ENCODE measurements at regions of chr22 and their contacts with region 1.

Region 1: DNA sequence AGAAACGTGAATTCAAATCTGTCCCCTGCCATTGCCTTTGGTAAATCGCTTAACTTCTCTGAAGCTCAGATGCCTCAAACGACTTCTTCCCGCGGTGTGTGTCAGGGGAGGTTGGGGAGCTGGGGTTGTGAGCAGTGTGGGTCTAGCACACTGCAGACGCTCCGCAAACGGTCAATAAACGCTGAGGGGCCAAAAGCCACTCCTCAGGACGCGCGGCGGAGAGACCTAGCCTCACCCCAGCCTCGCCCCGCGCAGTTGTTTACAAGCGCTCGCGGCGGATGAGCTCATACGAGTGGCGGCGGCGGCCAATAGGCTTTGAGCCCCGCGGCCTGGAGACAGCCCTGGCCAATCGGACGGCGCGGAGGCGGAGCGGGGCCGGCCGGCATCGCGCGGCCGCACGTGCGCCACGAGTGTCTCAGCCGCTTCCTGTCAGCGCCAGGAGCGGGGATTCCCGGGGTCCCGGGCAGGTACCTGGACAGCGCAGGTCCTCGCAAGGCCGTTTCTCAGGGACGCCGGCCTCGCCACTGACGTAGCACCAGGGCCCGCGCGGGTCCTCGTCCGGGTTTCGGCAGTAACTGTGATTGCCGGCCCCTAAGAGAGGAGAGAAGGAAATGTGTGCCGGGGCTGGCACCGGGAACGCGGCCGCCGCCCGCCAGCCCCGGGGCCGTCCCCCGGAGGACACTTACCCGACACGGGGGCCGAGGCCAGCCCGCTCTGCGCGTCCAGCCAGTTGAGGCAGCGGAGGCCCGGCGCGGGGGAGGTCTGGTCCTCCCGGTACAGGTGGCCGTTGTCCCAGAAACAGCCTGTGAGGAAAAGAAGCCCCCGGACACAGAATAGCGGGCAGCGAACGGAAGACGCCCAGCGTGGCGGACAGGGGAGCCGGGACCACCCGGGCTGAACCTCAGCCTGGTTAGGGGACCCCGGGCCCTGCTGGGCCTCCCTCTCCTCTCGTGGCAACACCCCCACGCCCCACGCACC is 1.5 kb downstream of the PIK3IP1 start:
- DNase-seq: peak; percentile 92
- ATAC-seq: peak; percentile 88
- H3K4me3 Mint-ChIP-seq: peak overlapping the region; percentile 74
- H3K27ac Mint-ChIP-seq: peak overlapping the region; percentile 71
- H3K4me1 Mint-ChIP-seq: peaks cover 26% of the 10 kb centered on the region
- H3K27me3 Mint-ChIP-seq: peaks cover 25% of the 10 kb centered on the region
- CTCF ChIP-seq: no peak

Region 2: DNA sequence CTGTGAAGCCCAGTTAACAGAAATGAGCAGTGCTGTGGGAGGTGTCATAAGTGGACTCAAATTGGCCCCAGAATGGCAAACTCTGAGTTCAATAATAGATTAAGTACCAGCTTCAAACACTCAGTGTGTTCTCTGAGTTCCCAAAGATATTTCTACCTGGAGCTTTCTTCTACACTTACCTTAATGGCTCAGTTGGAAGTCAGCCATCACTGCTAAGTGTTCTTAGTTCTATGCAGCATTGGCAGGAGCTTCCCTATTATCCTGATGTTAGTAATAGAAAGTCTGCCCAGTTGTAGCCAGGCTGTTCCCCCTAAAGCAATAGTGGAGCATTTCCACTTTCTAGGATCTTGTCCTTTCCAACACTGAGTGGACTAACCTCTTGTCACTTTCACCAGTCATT is 11.2 kb after region 1 on chr22:
- CTCF ChIA-PET with region 1: interaction called, 20 read pairs
- POLR2A ChIA-PET with region 1: interaction called, 3 read pairs
- DNase-seq: no peak
- ATAC-seq: peak; percentile 53
- H3K4me3 Mint-ChIP-seq: no peak overlapping the region
- H3K27ac Mint-ChIP-seq: no peak overlapping the region
- H3K4me1 Mint-ChIP-seq: peaks cover 5% of the 10 kb centered on the region; the same call in 1 of the 2 replicates
- H3K27me3 Mint-ChIP-seq: no peaks in the 10 kb centered on the region
- CTCF ChIP-seq: no peak

Region 3: DNA sequence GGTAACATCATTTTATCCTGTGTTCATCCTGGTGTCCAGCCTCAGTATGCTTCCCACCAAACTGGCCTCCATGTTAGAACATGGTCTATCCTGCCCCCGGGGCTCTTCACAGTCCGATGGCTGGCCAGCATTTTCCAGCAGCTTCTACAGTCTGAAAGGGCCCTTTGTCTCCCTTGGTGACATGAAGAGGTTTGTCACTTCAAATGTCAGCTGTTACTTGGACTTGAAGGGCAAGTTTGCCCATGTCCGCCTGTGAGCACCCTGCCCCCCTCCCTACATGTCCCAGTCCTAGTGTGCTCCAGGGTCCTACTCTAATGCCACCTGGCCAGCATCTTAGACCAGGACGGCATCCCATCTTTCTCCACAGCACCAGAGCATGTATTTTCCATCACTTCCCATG is 30.6 kb after region 1 on chr22:
- CTCF ChIA-PET with region 1: no interaction called
- POLR2A ChIA-PET with region 1: no interaction called
- DNase-seq: no peak
- ATAC-seq: no peak
- H3K4me3 Mint-ChIP-seq: no peak overlapping the region
- H3K27ac Mint-ChIP-seq: peak overlapping the region; percentile 6; the same call in 1 of the 2 replicates
- H3K4me1 Mint-ChIP-seq: no peaks in the 10 kb centered on the region
- H3K27me3 Mint-ChIP-seq: no peaks in the 10 kb centered on the region; the same call in 1 of the 2 replicates
- CTCF ChIP-seq: no peak

Region 4: DNA sequence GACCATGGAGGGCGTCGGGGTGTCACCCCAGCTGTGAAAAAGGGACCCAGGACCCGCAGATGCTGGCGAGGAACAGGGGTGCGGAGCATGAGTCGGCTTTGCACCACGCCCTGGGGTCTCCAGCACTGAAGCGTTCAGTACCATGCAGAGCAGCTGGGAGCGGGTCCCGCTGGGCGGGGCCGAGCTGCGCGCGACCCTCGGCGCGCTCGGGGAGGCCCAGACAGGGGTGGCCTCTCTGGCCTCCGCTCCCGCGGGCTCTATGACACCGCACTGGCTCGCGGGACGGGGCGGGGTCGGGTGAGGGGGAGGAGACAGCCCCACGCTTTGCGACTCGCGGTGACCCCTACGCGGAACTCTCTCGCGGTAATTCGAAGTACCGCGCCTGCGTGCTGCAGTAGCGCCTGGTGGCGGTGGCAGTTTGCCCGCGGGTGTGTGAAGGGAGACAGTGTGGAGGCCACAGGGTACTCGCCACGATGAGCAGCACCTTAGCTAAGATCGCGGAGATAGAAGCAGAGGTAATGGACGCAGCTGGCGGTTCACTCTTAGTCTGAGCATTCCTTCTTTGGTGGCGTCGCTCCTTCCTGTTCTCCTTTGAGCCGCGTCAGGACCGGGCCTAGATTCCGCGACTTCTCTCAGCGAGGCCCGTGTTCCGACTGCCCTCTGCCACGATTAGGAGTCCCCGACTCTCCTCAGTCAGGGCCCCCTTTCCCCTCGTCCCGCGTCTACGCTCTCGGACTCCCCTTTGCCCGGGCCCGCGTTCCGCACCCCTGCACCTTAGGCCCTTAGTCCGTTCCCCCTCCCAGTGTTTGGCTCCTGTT is 108.6 kb after region 1 on chr22 and contains the start of gene DRG1:
- CTCF ChIA-PET with region 1: no interaction called
- POLR2A ChIA-PET with region 1: no interaction called
- DNase-seq: peak; percentile 96
- ATAC-seq: peak; percentile 99
- H3K4me3 Mint-ChIP-seq: peak within 1 kb of the TSS; percentile 97
- H3K27ac Mint-ChIP-seq: peak within 1 kb of the TSS; percentile 93
- H3K4me1 Mint-ChIP-seq: peaks cover 11% of the 10 kb centered on the region
- H3K27me3 Mint-ChIP-seq: peaks cover 1% of the 10 kb centered on the region; the same call in 1 of the 2 replicates
- CTCF ChIP-seq: no peak
- total RNA-seq, gene DRG1: 60.4 to 79.2 TPM (median 64.0 TPM) in 3 replicates